BJ (cell line): ENCODE measurements at regions of chr5 and their contacts with region 1.

Region 1: GRCh38 chr5:138926257-138926656 is 51.1 kb upstream of the LRRTM2 start:
- DNase-seq: no peak
- H3K4me3 ChIP-seq: no peak overlapping the region
- H3K27me3 ChIP-seq: no peaks in the 10 kb centered on the region
- CTCF ChIP-seq: no peak

Region 2: DNA sequence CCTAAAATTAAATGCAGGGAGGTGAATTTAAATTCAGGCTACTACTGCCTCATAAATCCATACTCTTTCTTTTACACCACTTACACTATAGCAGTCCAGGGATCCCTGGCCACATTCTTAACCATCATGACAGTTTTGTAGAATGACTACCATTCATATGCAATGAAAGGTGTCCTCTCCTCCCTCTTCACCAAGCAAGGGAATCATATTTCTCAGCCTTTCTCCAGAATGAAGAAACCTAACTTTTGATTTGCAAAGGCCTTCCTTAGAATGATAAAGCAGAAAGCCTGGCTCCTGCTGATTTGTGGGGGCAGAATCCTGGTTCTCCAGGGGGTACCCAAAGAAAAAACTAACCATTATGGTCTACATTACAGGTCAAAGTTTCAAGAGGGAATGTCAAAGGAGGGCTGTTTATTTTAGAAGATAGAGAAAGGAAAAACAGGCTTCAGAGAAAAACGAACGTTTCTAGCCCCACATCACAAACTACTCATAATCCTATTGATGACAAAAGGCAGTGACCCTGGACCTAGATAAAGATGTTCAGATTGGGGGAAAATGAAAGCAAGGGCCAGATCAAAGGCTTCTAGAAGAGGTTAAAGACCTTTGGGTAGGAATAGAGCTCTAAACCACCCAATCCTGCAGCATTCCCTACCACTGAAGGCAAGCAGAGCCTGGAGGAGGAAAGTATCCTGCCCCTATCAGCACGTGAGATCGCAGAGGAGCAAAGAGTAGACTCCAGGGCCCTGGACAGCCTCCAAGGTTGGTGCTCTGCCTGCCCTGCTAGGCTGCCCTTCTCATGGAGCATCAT is 831.0 kb before region 1 on chr5:
- CTCF ChIA-PET with region 1: no interaction called
- POLR2A ChIA-PET with region 1: interaction called, 18 read pairs
- DNase-seq: no peak
- H3K4me3 ChIP-seq: no peak overlapping the region
- H3K27me3 ChIP-seq: peaks cover 10% of the 10 kb centered on the region
- CTCF ChIP-seq: no peak

Region 3: DNA sequence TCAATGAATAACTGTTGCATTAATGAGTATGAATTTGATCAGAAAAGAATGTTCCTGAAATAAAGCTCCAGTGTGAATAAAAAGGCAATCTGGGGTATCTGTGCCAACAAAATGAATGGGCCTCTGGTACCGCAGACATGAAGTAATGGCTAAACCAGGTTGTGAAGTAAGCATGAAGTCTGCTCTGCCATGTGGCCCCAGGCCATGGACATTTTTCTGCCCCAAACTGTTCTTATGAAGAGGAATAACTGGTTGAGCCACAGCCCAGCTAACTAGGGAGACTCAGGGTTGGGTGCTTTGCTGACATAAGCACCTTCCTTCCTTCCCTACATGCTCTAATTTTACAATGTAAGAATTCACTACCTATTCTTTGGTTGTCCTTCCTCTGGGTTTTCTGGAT is 96.3 kb after region 1 on chr5:
- CTCF ChIA-PET with region 1: no interaction called
- POLR2A ChIA-PET with region 1: no interaction called
- DNase-seq: no peak
- H3K4me3 ChIP-seq: no peak overlapping the region
- H3K27me3 ChIP-seq: no peaks in the 10 kb centered on the region
- CTCF ChIP-seq: no peak